ENCODE measurements at regions of chr2 and their contacts with region 1.

Region 1: DNA sequence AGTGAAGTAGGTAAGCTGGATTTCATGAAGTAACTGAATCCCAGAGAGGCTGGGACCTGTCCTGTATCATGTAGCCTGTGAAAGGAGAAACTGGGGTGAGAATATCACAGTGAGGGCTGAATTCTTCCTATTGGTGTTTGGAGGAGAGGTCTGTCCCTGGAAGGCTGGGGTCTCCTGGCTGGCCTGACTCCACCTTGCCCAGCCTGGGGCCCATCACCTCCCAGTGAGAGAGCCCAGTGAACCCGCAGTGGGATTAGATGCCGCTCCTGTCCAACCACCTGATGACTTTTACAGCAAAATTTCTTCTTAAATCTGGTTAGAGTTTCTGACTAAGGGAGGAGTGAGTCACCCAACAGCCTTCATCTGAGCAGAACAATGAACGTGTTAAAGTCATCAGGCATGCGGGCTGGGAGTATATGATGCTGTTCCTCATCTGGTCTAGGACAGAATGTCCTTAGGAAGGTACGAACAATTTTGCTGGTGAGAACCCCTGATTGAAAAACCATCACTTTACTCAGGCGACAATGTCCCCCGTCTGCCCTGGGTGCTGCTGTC is 152.9 kb downstream of the LPIN1 start:
- DNase-seq: no peak
- H3K4me3 ChIP-seq: no peak overlapping the region
- H3K27ac ChIP-seq: no peak overlapping the region
- H3K27me3 ChIP-seq: peaks cover 2% of the 10 kb centered on the region
- CTCF ChIP-seq: no peak

Region 2: DNA sequence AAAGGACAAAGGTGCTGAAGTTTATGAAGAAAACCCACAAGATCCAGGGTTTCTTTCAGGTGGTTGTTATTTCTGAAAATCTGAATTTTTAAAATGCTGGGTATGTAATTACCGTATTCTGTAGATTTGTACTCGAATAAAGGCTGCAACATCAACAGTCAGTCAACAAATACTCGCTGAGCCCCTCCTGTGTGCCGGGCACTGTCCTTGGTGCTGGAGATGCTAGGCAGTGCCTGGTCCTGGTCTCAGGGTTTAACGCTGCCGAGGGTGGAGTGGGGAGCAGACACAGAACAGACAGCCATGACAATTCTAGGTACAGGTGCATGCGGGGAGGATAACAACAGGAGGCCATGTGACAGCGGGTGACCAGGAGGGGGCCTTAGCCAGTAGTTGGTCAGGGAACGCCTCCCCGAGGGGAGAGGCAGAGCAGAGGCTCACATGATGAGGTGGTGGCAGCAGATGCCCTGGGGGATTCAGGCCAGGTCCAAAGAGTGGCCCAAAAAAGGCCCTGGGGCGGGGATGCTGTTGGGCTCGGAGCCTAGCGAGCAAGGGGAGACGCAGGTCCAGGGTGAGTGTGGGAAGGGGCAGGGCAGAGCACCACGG is 1059.4 kb before region 1 on chr2:
- CTCF ChIA-PET with region 1: interaction called, 10 read pairs
- POLR2A ChIA-PET with region 1: no interaction called
- DNase-seq: no peak
- H3K4me3 ChIP-seq: no peak overlapping the region
- H3K27ac ChIP-seq: no peak overlapping the region
- H3K27me3 ChIP-seq: peaks cover 13% of the 10 kb centered on the region
- CTCF ChIP-seq: no peak

Measured in AG04450 (cell line).